Left ventricle myocardium superior (tissue), 1 donor: ENCODE measurements at regions of chrX and their contacts with region 1.

Region 1: DNA sequence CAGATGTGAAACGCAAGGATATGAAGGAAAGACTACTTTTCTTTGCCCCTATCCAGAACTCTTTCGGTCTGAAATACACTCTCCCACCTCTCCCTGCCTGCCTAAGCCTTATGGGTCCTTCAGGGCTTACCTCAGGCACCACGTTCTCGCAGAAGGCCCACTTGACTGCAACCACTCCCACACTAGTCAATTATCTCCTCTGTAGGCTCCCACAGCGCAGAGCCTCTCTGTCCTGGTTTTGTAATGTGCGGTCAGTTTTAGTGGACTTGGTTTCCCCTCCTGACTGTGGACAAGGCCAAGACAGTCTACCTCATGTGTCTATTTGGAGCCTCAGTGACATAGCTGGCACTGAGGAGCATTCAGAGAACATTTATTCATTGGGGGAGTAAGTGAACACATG is 11.1 kb downstream of the CNGA2 start:
- DNase-seq: no peak
- ATAC-seq: no peak

Region 2: GRCh38 chrX:152632445-152633097 is 886.9 kb after region 1 on chrX:
- intact Hi-C with region 1: loop called (anchors 10 kb)
- DNase-seq: peak; percentile 31
- ATAC-seq: no peak